IMR-90 (cell line): ENCODE measurements at regions of chr1 and their contacts with region 1.

Region 1: GRCh38 chr1:151968058-151968457 is 25.6 kb downstream of the S100A10 start:
- DNase-seq: peak; percentile 41
- ATAC-seq: peak; percentile 77
- H3K4me3 ChIP-seq: no peak overlapping the region
- H3K27ac ChIP-seq: no peak overlapping the region
- H3K4me1 ChIP-seq: no peaks in the 10 kb centered on the region; the same call in 1 of the 2 replicates
- H3K27me3 ChIP-seq: no peaks in the 10 kb centered on the region
- CTCF ChIP-seq: peak; percentile 86
- POLR2A ChIP-seq: no peak
- RAD21 ChIP-seq: peak; percentile 87

Region 2: DNA sequence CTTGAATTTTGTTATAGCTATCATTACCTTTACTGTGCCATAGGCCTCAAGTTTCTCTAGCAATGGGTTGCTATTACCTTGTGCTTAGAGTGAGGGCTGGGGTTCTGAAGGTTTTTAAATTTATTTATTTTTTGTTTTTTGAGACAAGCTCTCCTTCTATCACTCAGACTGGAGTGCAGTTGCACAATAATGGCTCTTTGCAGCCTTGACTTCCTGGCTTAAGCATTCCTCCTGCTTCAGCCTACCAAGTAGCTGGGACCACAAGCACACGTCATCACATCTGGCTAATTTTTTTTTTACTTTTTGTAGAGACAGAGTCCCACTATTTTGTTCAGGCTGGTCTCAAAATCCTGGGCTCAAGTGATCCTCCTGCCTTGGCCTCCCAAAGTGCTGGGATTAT is 314.7 kb before region 1 on chr1:
- CTCF ChIA-PET with region 1: no interaction called
- POLR2A ChIA-PET with region 1: no interaction called
- dilution Hi-C with region 1: no loop called
- in situ Hi-C with region 1: no loop called
- intact Hi-C with region 1: no loop called
- DNase-seq: peak; percentile 62
- ATAC-seq: 0 out of 2 replicates have a peak, but pooled peaks have one; percentile 32
- H3K4me3 ChIP-seq: no peak overlapping the region
- H3K27ac ChIP-seq: no peak overlapping the region
- H3K4me1 ChIP-seq: no peaks in the 10 kb centered on the region
- H3K27me3 ChIP-seq: no peaks in the 10 kb centered on the region
- CTCF ChIP-seq: no peak
- POLR2A ChIP-seq: no peak
- RAD21 ChIP-seq: no peak

Region 3: DNA sequence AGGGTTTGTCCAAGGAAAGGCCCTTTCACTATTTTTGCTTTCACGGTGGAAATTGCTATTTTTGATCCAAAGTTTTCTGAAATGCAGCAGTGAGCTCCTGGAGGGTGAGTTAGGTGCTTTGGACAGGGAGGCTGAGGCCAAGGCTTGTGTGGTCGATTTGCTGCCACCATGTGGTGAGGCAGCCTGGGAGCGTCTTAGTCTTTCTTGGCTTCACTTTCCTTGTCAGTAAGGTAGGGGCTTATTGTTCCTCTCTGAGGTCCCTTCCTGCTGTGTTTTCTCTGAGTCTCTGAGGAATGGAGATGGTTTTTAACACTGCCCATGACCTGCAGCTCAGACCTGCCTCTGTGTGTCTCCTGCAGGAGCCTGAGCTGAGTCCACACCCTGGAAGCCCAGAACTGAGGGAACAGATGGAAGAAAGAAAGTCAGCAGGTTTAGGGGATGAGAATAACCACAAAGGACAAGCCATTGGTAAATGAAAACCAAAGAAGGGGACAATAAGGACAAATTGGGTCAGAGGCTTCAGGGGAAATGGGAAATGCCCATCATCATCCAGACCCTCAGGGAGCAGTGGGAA is 45.7 kb after region 1 on chr1:
- CTCF ChIA-PET with region 1: interaction called, 15 read pairs
- POLR2A ChIA-PET with region 1: no interaction called
- dilution Hi-C with region 1: no loop called
- in situ Hi-C with region 1: no loop called
- intact Hi-C with region 1: loop called (anchors 1 kb)
- DNase-seq: peak; percentile 56
- ATAC-seq: peak; percentile 57
- H3K4me3 ChIP-seq: no peak overlapping the region
- H3K27ac ChIP-seq: no peak overlapping the region
- H3K4me1 ChIP-seq: no peaks in the 10 kb centered on the region
- H3K27me3 ChIP-seq: peaks cover 30% of the 10 kb centered on the region
- CTCF ChIP-seq: peak; percentile 60
- POLR2A ChIP-seq: no peak
- RAD21 ChIP-seq: peak; percentile 47